ENCODE measurements at regions of chr3 and their contacts with region 1.

Region 1: DNA sequence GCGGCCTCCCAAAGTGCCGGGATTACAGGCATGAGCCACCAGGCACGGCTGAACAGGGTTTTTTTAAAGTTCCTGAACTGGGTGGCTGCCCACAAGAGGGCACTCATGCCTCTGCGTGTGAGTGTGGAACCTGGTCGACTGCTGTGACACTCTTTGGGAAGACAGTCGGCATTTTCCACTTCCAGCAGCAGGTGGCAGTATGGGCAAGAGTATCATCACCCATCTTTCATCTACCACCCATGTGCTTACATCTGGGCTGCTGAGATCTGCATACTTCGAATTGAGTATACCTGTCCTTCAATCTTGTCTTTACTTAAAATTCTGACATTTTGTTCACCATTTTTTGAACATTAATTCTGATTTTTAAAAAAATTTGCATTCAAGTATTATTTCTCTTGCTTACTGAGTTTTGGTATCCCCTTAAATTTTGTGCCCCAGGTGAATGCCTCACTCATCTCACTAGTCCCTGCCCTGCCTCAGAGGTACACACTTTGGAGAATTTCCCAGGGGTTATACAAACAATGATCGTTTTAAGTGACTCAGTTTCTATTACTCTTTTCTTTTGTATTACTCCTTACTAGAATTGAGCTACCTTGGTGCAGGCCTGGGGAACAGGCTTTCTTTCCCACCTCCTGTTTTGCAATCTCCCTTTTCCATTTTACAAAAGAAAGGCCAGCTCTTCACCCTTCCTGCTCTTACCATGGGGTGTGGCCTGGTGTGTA is 11.8 kb downstream of the CLEC3B start:
- DNase-seq: peak; percentile 90
- ATAC-seq: peak; percentile 91
- H3K4me3 ChIP-seq: peak overlapping the region in 1 of 2 experiments; percentile 49; a peak in 2 of 4 replicates
- H3K27ac ChIP-seq: no peak overlapping the region
- H3K4me1 ChIP-seq: peaks cover 4 to 23% of the 10 kb centered on the region in 2 experiments; a peak in 3 of 4 replicates
- H3K27me3 ChIP-seq: no peaks in the 10 kb centered on the region
- CTCF ChIP-seq: peak; percentile 91 to 99 (median 92)
- POLR2A ChIP-seq: no peak
- RAD21 ChIP-seq: peak; percentile 99

Region 2: DNA sequence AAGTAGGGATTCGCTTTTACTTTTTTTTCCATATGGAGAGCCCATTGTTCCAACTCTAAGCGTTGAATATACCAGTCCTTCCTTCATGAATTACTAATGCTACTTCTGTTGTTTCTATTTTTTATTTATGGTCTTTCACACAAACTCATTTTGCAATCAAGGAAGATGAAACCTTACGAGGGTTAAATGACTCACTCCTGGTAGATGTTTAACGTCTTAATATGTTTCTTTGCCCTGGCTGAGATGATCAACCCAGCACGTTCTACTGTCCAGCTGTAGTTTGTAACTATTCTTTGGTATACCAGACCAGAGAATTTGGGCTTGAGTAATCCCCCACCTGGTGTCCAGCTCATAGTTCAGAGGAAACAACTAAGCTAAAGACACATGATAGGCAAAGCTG is 85.1 kb after region 1 on chr3:
- CTCF ChIA-PET with region 1: interaction called, 10 read pairs
- POLR2A ChIA-PET with region 1: no interaction called
- RAD21 ChIA-PET with region 1: no interaction called
- intact Hi-C with region 1: loop called (anchors 5 kb)
- DNase-seq: no peak
- ATAC-seq: peak; percentile 3; the same call in 1 of the 2 replicates
- H3K4me3 ChIP-seq: peak overlapping the region; percentile 6 to 33; a peak in 3 of 4 replicates
- H3K27ac ChIP-seq: peak overlapping the region; percentile 91
- H3K4me1 ChIP-seq: peaks cover 96 to 100% of the 10 kb centered on the region in 2 experiments
- H3K27me3 ChIP-seq: no peaks in the 10 kb centered on the region
- CTCF ChIP-seq: no peak
- POLR2A ChIP-seq: no peak
- RAD21 ChIP-seq: no peak

Region 3: GRCh38 chr3:45210308-45211041 is 172.6 kb after region 1 on chr3:
- CTCF ChIA-PET with region 1: interaction called, 94 read pairs
- POLR2A ChIA-PET with region 1: interaction called, 6 read pairs
- RAD21 ChIA-PET with region 1: interaction called, 6 to 7 read pairs
- intact Hi-C with region 1: loop called (anchors 1 kb)
- DNase-seq: peak; percentile 70
- ATAC-seq: peak; percentile 98
- H3K4me3 ChIP-seq: no peak overlapping the region
- H3K27ac ChIP-seq: no peak overlapping the region
- H3K4me1 ChIP-seq: peaks cover 5 to 32% of the 10 kb centered on the region in 2 experiments; a peak in 3 of 4 replicates
- H3K27me3 ChIP-seq: no peaks in the 10 kb centered on the region
- CTCF ChIP-seq: peak; percentile 83 to 86 (median 86)
- POLR2A ChIP-seq: no peak
- RAD21 ChIP-seq: peak; percentile 92

Region 4: GRCh38 chr3:45656575-45657363 is 618.9 kb after region 1 on chr3:
- CTCF ChIA-PET with region 1: interaction called, 8 read pairs
- POLR2A ChIA-PET with region 1: interaction called, 4 read pairs
- RAD21 ChIA-PET with region 1: interaction called in 1 of 2 experiments, 3 read pairs
- intact Hi-C with region 1: loop called (anchors 2 kb)
- DNase-seq: peak; percentile 89
- ATAC-seq: peak; percentile 90
- H3K4me3 ChIP-seq: no peak overlapping the region
- H3K27ac ChIP-seq: no peak overlapping the region
- H3K4me1 ChIP-seq: peaks cover 0 to 15% of the 10 kb centered on the region in 2 experiments; a peak in 1 of 4 replicates
- H3K27me3 ChIP-seq: no peaks in the 10 kb centered on the region
- CTCF ChIP-seq: peak; percentile 86 to 93 (median 91)
- POLR2A ChIP-seq: no peak
- RAD21 ChIP-seq: peak; percentile 95

Region 5: DNA sequence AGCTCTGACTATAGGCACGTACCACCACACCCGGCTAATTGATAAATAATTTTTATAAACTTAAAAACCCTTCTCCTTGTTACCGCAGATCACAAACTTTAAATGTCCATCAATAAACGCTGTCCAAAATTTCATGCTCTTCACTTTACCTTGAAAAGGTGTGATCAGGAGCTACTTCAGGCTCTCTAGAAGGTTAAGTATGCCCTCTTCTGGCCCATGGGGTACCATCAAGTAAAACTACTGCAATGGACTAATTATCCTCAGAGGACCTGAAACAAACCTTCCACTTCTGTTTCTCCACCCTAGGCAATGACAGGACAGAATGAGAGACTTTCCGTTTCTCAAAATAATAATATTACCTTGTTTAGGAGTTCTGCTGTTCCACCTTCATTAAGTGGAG is 794.8 kb after region 1 on chr3:
- CTCF ChIA-PET with region 1: interaction called, 3 read pairs
- POLR2A ChIA-PET with region 1: no interaction called
- RAD21 ChIA-PET with region 1: no interaction called
- intact Hi-C with region 1: loop called (anchors 5 kb)
- DNase-seq: peak; percentile 21
- ATAC-seq: peak; percentile 93
- H3K4me3 ChIP-seq: no peak overlapping the region
- H3K27ac ChIP-seq: no peak overlapping the region
- H3K4me1 ChIP-seq: no peaks in the 10 kb centered on the region
- H3K27me3 ChIP-seq: no peaks in the 10 kb centered on the region
- CTCF ChIP-seq: peak; percentile 37 to 73 (median 57)
- POLR2A ChIP-seq: no peak
- RAD21 ChIP-seq: peak; percentile 88

Region 6: GRCh38 chr3:46078712-46079400 is 1041.0 kb after region 1 on chr3:
- CTCF ChIA-PET with region 1: interaction called, 4 read pairs
- POLR2A ChIA-PET with region 1: no interaction called
- RAD21 ChIA-PET with region 1: no interaction called
- intact Hi-C with region 1: loop called (anchors 5 kb)
- DNase-seq: peak; percentile 91
- ATAC-seq: peak; percentile 99
- H3K4me3 ChIP-seq: peak overlapping the region in 1 of 2 experiments; percentile 25; a peak in 2 of 4 replicates
- H3K27ac ChIP-seq: no peak overlapping the region
- H3K4me1 ChIP-seq: peaks cover 0 to 19% of the 10 kb centered on the region in 2 experiments; a peak in 1 of 4 replicates
- H3K27me3 ChIP-seq: no peaks in the 10 kb centered on the region
- CTCF ChIP-seq: peak; percentile 95 to 100 (median 100)
- POLR2A ChIP-seq: no peak
- RAD21 ChIP-seq: peak; percentile 99